ENCODE measurements at regions of chr11 and their contacts with region 1.

Region 1: GRCh38 chr11:93543292-93543977 is at the start of gene SMCO4:
- DNase-seq: peak; percentile 68
- H3K4me3 Mint-ChIP-seq: peak within 1 kb of the TSS; percentile 90
- H3K27ac Mint-ChIP-seq: peak within 1 kb of the TSS; percentile 79
- H3K4me1 Mint-ChIP-seq: peaks cover 31% of the 10 kb centered on the region
- H3K27me3 Mint-ChIP-seq: peaks cover 8% of the 10 kb centered on the region
- total RNA-seq, gene SMCO4: 40.8 and 41.5 TPM in 2 replicates

Region 2: DNA sequence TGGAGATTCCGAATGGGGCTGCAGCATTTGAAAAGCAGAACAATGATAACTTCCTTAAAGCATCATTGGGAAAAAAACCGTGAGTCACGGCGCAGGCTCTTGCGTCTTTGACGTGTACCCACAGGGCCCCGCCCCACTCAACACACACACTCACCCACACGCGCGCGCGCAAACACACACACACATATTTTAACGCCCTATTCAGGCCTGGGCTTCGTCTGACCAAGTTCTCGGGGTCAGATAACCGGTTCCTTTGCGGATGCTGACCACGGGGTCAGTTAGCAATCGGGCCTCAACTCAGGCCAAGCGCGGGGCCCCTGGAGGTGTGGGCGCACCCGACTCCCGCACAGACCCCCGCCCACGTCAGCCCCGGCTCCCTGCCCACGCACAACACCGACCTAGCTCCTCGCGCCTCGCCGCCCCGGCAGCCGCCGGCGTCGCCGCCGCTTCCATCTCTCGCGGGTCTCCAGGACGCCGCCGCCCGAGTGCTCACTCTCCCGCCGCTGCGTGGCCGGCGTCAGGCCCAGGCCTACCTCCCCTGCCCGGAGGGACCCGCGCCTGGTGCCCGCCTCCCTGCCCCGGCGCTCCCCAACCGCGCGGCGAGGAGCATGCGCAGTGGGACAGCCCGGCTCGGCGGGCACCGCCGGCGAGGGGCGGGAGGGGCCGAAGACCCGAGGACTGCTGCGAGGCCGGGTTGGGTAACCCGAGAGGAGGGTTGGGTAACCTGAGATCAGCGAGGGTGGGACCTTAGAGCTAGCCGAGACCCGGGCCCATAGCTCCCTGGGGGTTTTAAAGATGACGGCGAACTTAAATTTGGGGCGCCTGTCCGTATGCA is 345.8 kb before region 1 on chr11 and contains the start of gene SLC36A4:
- intact Hi-C with region 1: loop called (anchors 2 kb)
- DNase-seq: peak; percentile 83
- H3K4me3 Mint-ChIP-seq: peak within 1 kb of the TSS; percentile 88
- H3K27ac Mint-ChIP-seq: peak within 1 kb of the TSS; percentile 92
- H3K4me1 Mint-ChIP-seq: peaks cover 21% of the 10 kb centered on the region
- H3K27me3 Mint-ChIP-seq: peaks cover 15% of the 10 kb centered on the region
- total RNA-seq, gene SLC36A4: 18.9 and 19.8 TPM in 2 replicates

Region 3: GRCh38 chr11:93234602-93235207 is 308.7 kb before region 1 on chr11:
- intact Hi-C with region 1: loop called (anchors 2 kb)
- DNase-seq: peak; percentile 48
- H3K4me3 Mint-ChIP-seq: no peak overlapping the region
- H3K27ac Mint-ChIP-seq: no peak overlapping the region
- H3K4me1 Mint-ChIP-seq: no peaks in the 10 kb centered on the region
- H3K27me3 Mint-ChIP-seq: peaks cover 26% of the 10 kb centered on the region

Region 4: GRCh38 chr11:93407777-93408401 is 135.5 kb before region 1 on chr11:
- intact Hi-C with region 1: loop called (anchors 10 kb)
- DNase-seq: no peak
- H3K4me3 Mint-ChIP-seq: no peak overlapping the region
- H3K27ac Mint-ChIP-seq: no peak overlapping the region
- H3K4me1 Mint-ChIP-seq: no peaks in the 10 kb centered on the region
- H3K27me3 Mint-ChIP-seq: peaks cover 12% of the 10 kb centered on the region

Region 5: GRCh38 chr11:93487032-93487483 is 56.4 kb before region 1 on chr11:
- intact Hi-C with region 1: loop called (anchors 5 kb)
- DNase-seq: no peak
- H3K4me3 Mint-ChIP-seq: no peak overlapping the region
- H3K27ac Mint-ChIP-seq: no peak overlapping the region
- H3K4me1 Mint-ChIP-seq: peaks cover 1% of the 10 kb centered on the region
- H3K27me3 Mint-ChIP-seq: no peaks in the 10 kb centered on the region

Region 6: DNA sequence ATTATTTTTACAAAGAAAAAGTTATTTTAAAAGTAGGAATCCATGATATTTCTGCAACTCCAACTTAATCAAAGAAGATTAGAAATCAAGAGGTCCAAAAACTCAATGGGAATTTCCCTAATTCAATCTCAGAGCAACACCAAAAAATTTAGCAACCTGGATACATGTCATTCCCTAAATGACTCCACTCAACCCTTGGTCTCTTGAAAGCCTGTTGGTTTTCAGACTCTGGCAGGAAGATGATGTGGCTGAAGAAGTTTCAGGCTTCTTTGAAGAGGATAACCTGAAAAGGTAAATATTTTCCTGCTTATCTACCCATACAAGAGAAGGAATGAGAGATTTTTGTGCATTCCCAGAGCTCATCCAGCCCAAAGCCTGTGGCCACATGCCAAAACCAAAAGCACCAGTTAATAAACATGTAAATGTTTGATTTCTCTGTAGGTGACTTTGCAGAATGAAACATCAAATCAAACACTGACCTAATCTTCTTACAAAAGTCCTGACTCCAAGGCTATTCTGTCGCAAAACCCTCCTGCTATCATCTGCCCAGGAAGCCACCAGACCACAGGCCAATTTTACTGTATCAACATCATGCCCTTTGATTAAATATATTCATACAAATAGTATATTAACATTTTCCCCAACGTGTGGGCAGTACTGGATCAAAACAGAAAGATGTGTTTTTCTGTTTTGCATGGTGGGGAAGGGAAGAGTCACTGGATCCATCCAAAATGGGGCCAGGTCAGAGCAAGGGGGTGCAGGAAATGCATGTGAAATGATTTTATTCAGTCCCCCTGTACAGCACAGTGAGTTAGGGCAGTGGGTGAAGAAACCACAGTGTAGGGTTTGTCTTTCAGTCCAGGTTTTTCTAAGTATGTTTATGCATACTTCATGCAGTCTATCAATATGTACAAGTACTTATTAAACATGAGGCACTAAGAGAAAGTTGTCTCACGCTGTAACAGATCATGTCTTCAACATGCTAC is 39.0 kb before region 1 on chr11:
- intact Hi-C with region 1: loop called (anchors 5 kb)
- DNase-seq: no peak
- H3K4me3 Mint-ChIP-seq: no peak overlapping the region
- H3K27ac Mint-ChIP-seq: peak overlapping the region; percentile 5
- H3K4me1 Mint-ChIP-seq: peaks cover 21% of the 10 kb centered on the region
- H3K27me3 Mint-ChIP-seq: no peaks in the 10 kb centered on the region